Common myeloid progenitor, CD34-positive (primary cell): ENCODE measurements at regions of chr7 and their contacts with region 1.

Region 1: DNA sequence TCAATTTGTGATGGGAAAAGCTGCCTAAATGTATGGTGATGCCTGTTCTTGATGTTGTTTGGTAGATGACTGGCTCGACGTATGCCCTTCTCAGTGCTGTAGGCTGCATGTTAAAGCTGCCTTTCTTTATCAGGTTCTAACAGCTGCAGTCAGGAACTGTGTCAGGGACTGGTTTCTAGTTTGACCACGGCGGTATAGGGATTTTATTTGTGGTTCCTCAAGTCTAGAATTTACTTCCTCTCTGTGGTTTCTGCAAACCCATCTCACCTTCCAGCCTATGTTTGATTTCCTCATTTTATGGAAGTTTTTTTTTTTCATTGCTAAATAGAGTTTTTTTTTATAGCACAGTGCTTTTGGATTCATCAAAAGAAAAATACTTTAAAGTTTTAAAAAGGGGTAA is 26.5 kb downstream of the LMTK2 start:
- DNase-seq: peak; percentile 97 to 99 (median 99)
- H3K4me3 ChIP-seq: peak overlapping the region in 1 of 7 experiments; percentile 37
- H3K27ac ChIP-seq: peak overlapping the region in 1 of 2 experiments; percentile 17
- H3K4me1 ChIP-seq: peaks cover 34 to 52% (median 46%) of the 10 kb centered on the region in 4 experiments
- H3K27me3 ChIP-seq: peaks cover 0 to 26% (median 13%) of the 10 kb centered on the region in 5 experiments

Region 2: DNA sequence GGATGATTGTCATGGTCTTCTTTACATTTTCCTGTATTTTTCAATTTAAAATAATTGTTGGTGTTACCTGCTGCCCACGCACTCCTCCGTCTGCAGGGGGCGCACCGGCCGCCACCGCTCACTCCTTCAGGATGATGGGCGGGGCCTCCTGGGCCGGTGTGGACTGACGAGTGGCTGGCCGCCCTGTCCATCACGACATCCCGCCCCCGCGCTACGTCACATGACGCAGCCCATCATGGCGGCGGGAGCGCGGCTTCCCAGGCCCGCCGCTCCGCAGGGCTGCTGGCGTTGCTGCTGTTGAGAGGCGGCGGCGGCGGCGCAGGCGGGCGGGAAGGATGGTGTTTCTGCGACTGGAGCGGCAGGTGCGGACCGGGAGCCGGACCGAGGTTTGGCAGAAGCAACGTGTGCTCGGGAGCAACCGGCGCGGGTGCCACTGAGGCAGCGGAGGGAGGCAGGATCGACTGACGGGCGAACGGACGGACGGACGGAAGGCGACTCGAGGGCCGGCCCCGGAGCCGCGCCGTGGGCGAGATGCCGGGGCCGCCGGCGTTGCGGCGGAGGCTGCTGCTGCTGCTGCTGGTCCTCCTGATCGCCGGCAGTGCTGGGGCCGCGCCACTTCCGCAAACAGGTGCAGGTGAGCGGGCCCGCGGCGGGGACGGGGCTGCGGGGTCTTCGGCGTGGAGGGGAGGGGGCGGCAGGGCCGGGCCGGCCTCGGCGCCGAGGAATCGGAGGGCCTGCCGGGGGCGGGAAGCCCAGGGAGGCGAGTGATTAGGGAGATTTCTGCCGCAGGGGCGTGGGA is 26.3 kb before region 1 on chr7 and contains the start of gene LMTK2:
- CTCF ChIA-PET with region 1: interaction called, 73 read pairs
- POLR2A ChIA-PET with region 1: no interaction called
- DNase-seq: peak; percentile 91 to 95 (median 95)
- H3K4me3 ChIP-seq: peak within 1 kb of the TSS; percentile 82 to 98 (median 92)
- H3K27ac ChIP-seq: peak within 1 kb of the TSS in 1 of 2 experiments; percentile 54
- H3K4me1 ChIP-seq: peaks cover 3 to 11% (median 7%) of the 10 kb centered on the region in 4 experiments
- H3K27me3 ChIP-seq: peaks cover 0 to 3% (median 0%) of the 10 kb centered on the region in 5 experiments

Region 3: DNA sequence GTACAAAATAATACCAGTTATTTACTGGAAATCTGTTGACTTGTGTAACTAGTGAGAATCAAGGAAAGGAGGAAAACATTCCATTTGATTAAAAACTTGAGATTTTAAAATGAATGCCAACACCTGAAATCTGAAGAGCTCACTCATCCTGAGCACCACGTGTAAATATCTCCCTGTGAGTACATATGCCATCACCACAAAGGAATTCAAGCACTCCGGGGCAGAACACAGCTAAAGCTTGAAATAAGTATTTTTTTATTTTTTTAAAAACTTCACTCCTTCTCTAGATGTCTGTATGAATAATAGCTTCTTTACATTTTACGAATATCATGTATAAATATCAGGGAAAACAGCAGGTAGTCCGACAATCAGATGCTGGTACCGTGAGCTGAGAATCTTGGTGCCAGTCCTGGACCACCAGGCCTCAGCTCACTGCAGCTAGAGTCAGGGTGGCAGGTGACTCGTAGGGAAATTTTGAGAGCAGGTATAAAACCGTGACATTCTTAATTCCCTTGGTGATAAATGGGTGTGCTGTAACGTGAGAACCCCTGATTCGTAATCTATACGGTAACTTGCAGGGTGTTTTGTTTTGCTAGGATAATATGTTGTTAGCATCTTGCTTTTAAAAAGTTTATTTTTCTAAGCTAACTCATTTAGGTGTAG is 13.8 kb before region 1 on chr7:
- CTCF ChIA-PET with region 1: interaction called, 10 read pairs
- POLR2A ChIA-PET with region 1: interaction called, 3 read pairs
- DNase-seq: no peak
- H3K4me3 ChIP-seq: no peak overlapping the region
- H3K27ac ChIP-seq: no peak overlapping the region
- H3K4me1 ChIP-seq: peaks cover 0 to 11% (median 6%) of the 10 kb centered on the region in 4 experiments
- H3K27me3 ChIP-seq: no peaks in the 10 kb centered on the region